Body of pancreas (tissue), 4 donors: ENCODE measurements at regions of chr18 and their contacts with region 1.

Region 1: GRCh38 chr18:69022426-69022825 is 224.5 kb downstream of the CCDC102B start:
- DNase-seq: no peak
- ATAC-seq: no peak
- H3K4me3 ChIP-seq: no peak overlapping the region
- H3K27ac ChIP-seq: no peak overlapping the region
- H3K4me1 ChIP-seq: no peaks in the 10 kb centered on the region
- H3K27me3 ChIP-seq: no peaks in the 10 kb centered on the region
- CTCF ChIP-seq: no peak
- POLR2A ChIP-seq: no peak

Region 2: GRCh38 chr18:70068981-70069380 is 1046.6 kb after region 1 on chr18:
- intact Hi-C with region 1: loop called (anchors 10 kb)
- DNase-seq: no peak
- ATAC-seq: no peak
- H3K4me3 ChIP-seq: no peak overlapping the region
- H3K27ac ChIP-seq: no peak overlapping the region
- H3K4me1 ChIP-seq: no peaks in the 10 kb centered on the region
- H3K27me3 ChIP-seq: no peaks in the 10 kb centered on the region
- CTCF ChIP-seq: no peak
- POLR2A ChIP-seq: no peak